ENCODE measurements at regions of chr20 and their contacts with region 1.

Region 1: GRCh38 chr20:58650776-58651558 is at the start of gene STX16:
- DNase-seq: peak; percentile 90
- ATAC-seq: peak; percentile 76
- H3K4me3 Mint-ChIP-seq: peak within 1 kb of the TSS; percentile 97
- H3K27ac Mint-ChIP-seq: peak within 1 kb of the TSS; percentile 99
- H3K4me1 Mint-ChIP-seq: peaks cover 7% of the 10 kb centered on the region
- H3K27me3 Mint-ChIP-seq: peaks cover 4% of the 10 kb centered on the region
- total RNA-seq, gene STX16: 190 to 195 TPM

Region 2: DNA sequence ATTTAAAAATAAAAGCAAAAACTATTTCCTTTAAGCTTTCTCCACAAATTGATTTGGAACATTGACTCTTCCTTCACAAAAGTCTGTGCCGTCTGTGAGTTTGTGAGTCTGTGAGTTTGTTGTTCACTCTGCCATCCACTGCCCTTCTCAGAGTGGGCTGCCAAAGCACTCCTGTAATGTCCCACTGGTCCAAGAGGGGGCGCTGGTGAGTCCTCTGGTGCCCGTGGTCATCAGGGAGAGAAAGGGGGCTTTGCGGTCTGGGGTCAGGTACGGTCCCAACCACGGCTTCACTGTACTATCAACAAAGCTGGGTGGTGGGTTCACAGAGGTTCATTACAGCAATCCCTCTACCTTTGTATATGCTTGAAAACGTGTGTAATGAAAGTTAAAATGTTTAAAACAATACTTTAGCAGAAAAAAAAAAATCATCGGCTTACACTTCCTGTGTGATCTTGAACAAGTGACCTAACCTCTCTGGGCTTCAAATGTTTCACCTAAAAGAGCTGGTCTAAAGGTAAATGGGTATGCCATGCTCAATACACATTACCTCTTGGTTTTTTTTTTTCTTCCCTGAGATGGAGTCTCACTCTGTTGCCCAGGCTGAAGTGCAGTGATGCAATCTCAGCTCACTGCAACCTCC is 417.0 kb before region 1 on chr20:
- POLR2A ChIA-PET with region 1: interaction called, 13 read pairs
- DNase-seq: peak; percentile 55
- ATAC-seq: no peak
- H3K4me3 Mint-ChIP-seq: no peak overlapping the region
- H3K27ac Mint-ChIP-seq: no peak overlapping the region
- H3K4me1 Mint-ChIP-seq: peaks cover 23% of the 10 kb centered on the region
- H3K27me3 Mint-ChIP-seq: peaks cover 12% of the 10 kb centered on the region

Region 3: GRCh38 chr20:58664883-58665282 is 13.9 kb after region 1 on chr20:
- POLR2A ChIA-PET with region 1: interaction called, 89 read pairs
- DNase-seq: no peak
- ATAC-seq: no peak
- H3K4me3 Mint-ChIP-seq: no peak overlapping the region
- H3K27ac Mint-ChIP-seq: peak overlapping the region; percentile 62
- H3K4me1 Mint-ChIP-seq: peaks cover 54% of the 10 kb centered on the region
- H3K27me3 Mint-ChIP-seq: no peaks in the 10 kb centered on the region

Region 4: DNA sequence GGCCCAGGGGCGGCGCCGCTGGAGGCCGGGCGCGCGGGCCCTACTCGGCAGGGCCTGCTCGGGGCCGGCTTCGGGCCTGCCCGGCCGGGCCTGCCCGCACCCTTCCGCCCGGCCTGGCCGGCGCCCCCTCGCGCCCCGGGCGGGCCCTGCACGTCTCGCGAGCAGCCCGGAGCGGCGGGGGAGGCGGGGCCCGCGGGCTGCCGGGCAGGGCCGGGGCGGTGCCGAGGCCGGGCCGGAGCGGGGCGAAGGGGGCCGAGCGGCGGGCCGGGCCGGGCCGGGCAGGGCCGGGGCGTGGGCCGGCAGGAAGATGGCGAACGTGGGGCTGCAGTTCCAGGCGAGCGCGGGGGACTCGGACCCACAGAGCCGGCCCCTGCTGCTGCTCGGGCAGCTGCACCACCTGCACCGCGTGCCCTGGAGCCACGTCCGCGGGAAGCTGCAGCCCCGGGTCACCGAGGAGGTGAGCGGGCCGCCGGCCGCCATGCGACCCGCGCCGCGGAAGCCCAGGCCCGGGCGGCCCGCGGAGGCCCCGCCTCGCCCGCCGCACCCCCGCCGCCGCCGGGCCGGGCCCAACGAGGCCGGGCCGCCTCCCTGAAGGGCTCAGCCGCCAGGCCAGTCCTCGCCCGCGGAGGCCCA is 41.7 kb after region 1 on chr20 and contains the start of gene NPEPL1:
- POLR2A ChIA-PET with region 1: interaction called, 75 read pairs
- DNase-seq: peak; percentile 87
- ATAC-seq: peak; percentile 94
- H3K4me3 Mint-ChIP-seq: peak within 1 kb of the TSS; percentile 79
- H3K27ac Mint-ChIP-seq: peak within 1 kb of the TSS; percentile 83
- H3K4me1 Mint-ChIP-seq: peaks cover 11% of the 10 kb centered on the region
- H3K27me3 Mint-ChIP-seq: no peaks in the 10 kb centered on the region
- total RNA-seq, gene NPEPL1: 37.8 to 41.3 TPM

Region 5: GRCh38 chr20:58850693-58851174 is 199.8 kb after region 1 on chr20 and contains the start of gene GNAS-AS1:
- POLR2A ChIA-PET with region 1: interaction called, 21 read pairs
- DNase-seq: peak; percentile 85
- ATAC-seq: peak; percentile 77
- H3K4me3 Mint-ChIP-seq: peak within 1 kb of the TSS; percentile 91
- H3K27ac Mint-ChIP-seq: peak within 1 kb of the TSS; percentile 62
- H3K4me1 Mint-ChIP-seq: peaks cover 44% of the 10 kb centered on the region
- H3K27me3 Mint-ChIP-seq: peaks cover 57% of the 10 kb centered on the region
- total RNA-seq, gene GNAS-AS1: 1.0 to 1.6 TPM

Measured in activated naive CD8-positive, alpha-beta T cell treated with anti-CD3 and anti-CD28 coated beads, Interleukin-2, amount 10 ng/mL, durations not matched to agents 7 days and 5 days (primary cell).